Left cardiac atrium (tissue), 4 donors: ENCODE measurements at regions of chr16 and their contacts with region 1.

Region 1: GRCh38 chr16:84484579-84485254 is 19.7 kb downstream of the MEAK7 start:
- DNase-seq: peak; percentile 69
- ATAC-seq: peak; percentile 76 to 90

Region 2: GRCh38 chr16:83826146-83826913 is 658.4 kb before region 1 on chr16:
- intact Hi-C with region 1: loop called in 1 of 2 experiments (anchors 2 kb)
- DNase-seq: peak; percentile 86
- ATAC-seq: peak; percentile 94 to 96

Region 3: GRCh38 chr16:83956336-83957289 is 528.1 kb before region 1 on chr16:
- intact Hi-C with region 1: loop called (anchors 5 to 10 kb)
- DNase-seq: peak; percentile 83
- ATAC-seq: peak; percentile 3 to 12

Region 4: DNA sequence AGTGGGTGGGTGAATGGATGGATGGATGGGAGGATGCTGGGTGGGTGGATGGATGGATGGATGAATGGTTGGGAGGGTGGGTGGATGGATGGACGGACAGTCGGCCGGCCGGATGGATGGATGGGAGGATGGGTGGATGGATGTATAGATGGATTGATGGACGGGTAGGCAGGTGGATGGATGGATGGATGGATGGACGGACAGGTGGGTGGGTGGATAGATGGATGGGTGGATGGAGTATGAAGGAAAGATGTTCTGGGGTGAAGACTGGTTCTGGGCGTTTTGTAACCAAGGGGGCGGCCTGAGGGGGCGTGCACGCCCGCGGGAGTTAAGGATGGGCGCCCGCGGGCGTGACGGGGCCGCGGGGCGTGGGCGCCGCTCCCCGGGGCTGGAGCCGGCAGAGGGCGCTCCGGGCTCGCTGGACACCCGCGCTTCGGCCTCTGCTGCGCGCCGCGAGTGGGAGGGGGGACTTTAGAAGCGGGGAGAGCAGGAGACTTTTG is 516.9 kb before region 1 on chr16 and contains the start of gene NECAB2:
- intact Hi-C with region 1: loop called in 1 of 2 experiments (anchors 10 kb)
- DNase-seq: peak; percentile 70
- ATAC-seq: peak; percentile 76
- total RNA-seq, gene NECAB2: 0.91 TPM in 1 of 2 donors, not detected in the other

Region 5: DNA sequence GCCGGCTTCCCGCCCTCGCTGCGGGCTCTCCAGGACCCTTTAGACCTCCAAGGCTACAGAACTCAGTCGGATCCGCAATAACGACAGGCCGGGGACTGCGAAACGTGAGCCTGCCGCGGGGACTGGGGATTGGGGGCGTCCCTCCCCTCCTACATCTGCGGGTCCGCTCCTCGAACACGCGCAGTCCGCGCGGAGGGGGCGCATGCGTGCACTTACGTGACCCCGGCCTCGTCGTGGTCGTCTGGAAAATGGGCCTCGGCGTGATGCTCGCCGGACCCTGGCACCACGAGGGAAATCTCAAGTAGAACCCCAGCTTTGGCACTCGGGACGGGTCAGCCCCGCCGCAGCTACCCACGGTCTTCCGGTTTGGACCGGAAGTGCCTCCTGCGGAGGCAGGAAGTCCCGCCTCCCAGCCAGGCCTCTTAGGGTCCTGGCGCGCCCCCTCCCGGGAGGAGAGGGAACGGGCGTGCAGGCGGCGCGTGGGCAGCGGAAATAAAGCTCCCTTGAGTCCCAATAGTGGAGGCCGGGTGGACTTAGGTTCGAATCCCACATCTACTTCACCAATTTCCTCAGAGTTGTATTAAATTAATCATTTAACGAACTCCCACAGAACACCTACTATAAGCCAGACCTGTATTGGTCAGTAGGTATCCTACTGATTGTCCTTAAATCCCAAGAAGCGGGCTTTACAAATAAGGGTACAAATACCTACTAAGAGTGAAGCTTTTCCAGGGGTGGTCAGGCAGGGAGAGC is 297.9 kb before region 1 on chr16 and contains the start of gene TAF1C:
- intact Hi-C with region 1: loop called in 1 of 2 experiments (anchors 10 kb)
- DNase-seq: peak; percentile 94
- ATAC-seq: peak; percentile 97 to 98
- total RNA-seq, gene TAF1C: 27.9 to 33.6 TPM

Region 6: DNA sequence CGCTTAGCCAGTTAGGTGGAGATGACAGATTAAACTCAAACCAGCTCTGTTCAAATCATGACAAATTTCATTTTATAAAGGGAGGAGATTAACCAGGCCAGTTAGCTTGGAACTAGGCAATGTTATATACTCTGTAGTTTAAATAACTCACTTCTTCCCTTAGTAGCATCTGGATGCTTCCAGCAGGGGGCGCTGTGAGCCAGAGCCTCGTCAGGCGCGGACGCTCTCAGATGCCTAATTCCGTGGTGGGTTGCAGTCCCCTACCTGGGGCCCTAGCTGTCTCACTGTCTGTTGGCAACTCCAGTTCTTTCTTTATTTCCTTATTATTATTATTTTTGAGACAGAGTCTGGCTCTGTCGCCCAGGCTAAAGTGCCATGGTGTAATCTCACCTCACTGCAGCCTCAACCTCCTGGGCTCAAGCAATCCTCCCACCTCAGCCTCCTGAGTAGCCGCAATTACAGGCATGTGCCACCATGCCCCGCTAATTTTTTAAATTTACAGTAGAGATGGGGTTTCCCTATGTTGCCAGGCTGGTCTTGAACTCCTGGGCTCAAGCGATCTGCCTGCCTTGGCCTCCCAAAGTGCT is 207.4 kb before region 1 on chr16:
- intact Hi-C with region 1: loop called (anchors 1 to 10 kb)
- DNase-seq: peak; percentile 71
- ATAC-seq: peak; percentile 61 to 74

Region 7: GRCh38 chr16:84925092-84925772 is 440.5 kb after region 1 on chr16:
- intact Hi-C with region 1: no loop called
- DNase-seq: peak; percentile 66
- ATAC-seq: peak in 1 of 2 donors; percentile 3